Activated B cell treated with CpG ODN at 0.5 μM for 24 hours (primary cell): ENCODE measurements at regions of chr7 and their contacts with region 1.

Region 1: GRCh38 chr7:24572997-24573625 is at the start of gene PALS2:
- DNase-seq: peak; percentile 87
- ATAC-seq: peak; percentile 73
- H3K4me3 Mint-ChIP-seq: peak within 1 kb of the TSS; percentile 91
- H3K27ac Mint-ChIP-seq: peak within 1 kb of the TSS; percentile 89
- H3K4me1 Mint-ChIP-seq: peaks cover 40% of the 10 kb centered on the region
- H3K27me3 Mint-ChIP-seq: no peaks in the 10 kb centered on the region
- CTCF ChIP-seq: no peak
- total RNA-seq, gene PALS2: 29.8 and 34.8 TPM in 2 replicates

Region 2: GRCh38 chr7:23679898-23680413 is 893.2 kb before region 1 on chr7 and contains the start of gene FAM221A:
- CTCF ChIA-PET with region 1: no interaction called
- POLR2A ChIA-PET with region 1: no interaction called
- intact Hi-C with region 1: loop called (anchors 10 kb)
- DNase-seq: peak; percentile 68
- ATAC-seq: peak; percentile 99
- H3K4me3 Mint-ChIP-seq: peak within 1 kb of the TSS; percentile 90
- H3K27ac Mint-ChIP-seq: peak within 1 kb of the TSS; percentile 43
- H3K4me1 Mint-ChIP-seq: peaks cover 20% of the 10 kb centered on the region
- H3K27me3 Mint-ChIP-seq: no peaks in the 10 kb centered on the region
- CTCF ChIP-seq: no peak
- total RNA-seq, gene FAM221A: 6.5 and 8.3 TPM in 2 replicates

Region 3: DNA sequence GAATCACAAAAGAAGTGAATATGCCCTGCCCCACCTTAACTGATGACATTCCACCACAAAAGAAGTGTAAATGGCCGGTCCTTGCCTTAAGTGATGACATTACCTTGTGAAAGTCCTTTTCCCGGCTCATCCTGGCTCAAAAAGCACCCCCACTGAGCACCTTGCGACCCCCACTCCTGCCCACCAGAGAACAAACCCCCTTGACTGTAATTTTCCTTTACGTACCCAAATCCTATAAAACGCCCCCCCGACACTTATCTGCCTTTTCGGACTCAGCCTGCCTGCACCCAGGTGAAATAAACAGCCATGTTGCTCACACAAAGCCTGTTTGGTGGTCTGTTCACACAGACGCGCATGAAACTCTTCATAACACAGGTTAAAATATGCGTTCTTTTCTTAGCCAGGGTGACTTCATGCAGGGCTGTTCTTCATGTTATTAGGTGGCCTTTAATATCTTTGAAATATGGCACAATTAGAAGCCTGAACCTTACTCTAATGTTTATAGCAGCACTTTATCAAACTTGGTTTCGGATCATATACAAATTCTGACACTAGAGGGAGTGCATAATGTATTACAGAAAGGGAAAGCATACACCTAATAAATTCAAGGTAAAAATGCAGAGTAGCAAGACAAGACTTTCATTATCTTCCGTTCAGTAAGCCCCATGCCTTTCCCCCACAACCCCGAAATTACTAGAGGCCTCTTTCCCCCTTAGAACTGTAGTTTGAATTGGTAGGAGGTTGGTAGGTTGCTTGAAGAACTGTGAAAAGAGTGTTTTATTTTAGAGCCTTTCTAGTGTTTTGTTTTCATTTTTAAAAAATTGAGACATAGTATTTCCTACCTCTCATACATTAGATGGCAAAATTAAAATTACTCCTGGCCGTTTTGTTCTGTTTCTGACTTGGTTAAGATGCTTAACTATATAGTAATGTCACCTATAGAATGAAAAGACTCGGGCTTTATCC is 171.2 kb before region 1 on chr7:
- CTCF ChIA-PET with region 1: no interaction called
- POLR2A ChIA-PET with region 1: no interaction called
- intact Hi-C with region 1: loop called (anchors 1 kb)
- DNase-seq: no peak
- ATAC-seq: no peak
- H3K4me3 Mint-ChIP-seq: no peak overlapping the region
- H3K27ac Mint-ChIP-seq: no peak overlapping the region
- H3K4me1 Mint-ChIP-seq: peaks cover 6% of the 10 kb centered on the region
- H3K27me3 Mint-ChIP-seq: peaks cover 6% of the 10 kb centered on the region
- CTCF ChIP-seq: no peak

Region 4: GRCh38 chr7:24665564-24666294 is 92.6 kb after region 1 on chr7:
- CTCF ChIA-PET with region 1: interaction called, 18 read pairs
- POLR2A ChIA-PET with region 1: no interaction called
- intact Hi-C with region 1: loop called (anchors 1 kb)
- DNase-seq: no peak
- ATAC-seq: no peak
- H3K4me3 Mint-ChIP-seq: no peak overlapping the region
- H3K27ac Mint-ChIP-seq: no peak overlapping the region
- H3K4me1 Mint-ChIP-seq: no peaks in the 10 kb centered on the region
- H3K27me3 Mint-ChIP-seq: no peaks in the 10 kb centered on the region
- CTCF ChIP-seq: peak; percentile 89

Region 5: GRCh38 chr7:24732646-24733413 is 159.7 kb after region 1 on chr7:
- CTCF ChIA-PET with region 1: no interaction called
- POLR2A ChIA-PET with region 1: no interaction called
- intact Hi-C with region 1: no loop called
- DNase-seq: no peak
- ATAC-seq: no peak
- H3K4me3 Mint-ChIP-seq: no peak overlapping the region
- H3K27ac Mint-ChIP-seq: no peak overlapping the region
- H3K4me1 Mint-ChIP-seq: peaks cover 6% of the 10 kb centered on the region
- H3K27me3 Mint-ChIP-seq: peaks cover 6% of the 10 kb centered on the region
- CTCF ChIP-seq: no peak

Region 6: DNA sequence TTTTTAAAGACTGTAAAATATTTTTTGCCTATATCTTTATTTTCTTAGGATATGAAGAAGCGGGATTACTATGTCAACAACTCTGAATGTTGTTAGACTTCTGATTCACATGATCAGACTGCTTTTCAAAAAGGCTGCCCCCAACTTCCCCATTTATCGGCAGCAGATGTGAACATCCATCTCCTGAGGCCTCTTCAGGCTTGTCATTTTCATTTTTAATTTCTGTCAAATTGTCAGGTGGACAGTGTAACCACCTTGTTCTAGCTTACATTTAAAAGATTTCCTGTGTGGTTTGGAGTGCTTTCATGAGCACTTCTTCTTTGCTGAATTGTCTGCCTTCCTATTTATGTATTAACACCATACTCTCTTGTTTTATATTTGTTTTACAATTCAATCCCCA is 263.0 kb after region 1 on chr7:
- CTCF ChIA-PET with region 1: no interaction called
- POLR2A ChIA-PET with region 1: no interaction called
- intact Hi-C with region 1: loop called (anchors 10 kb)
- DNase-seq: no peak
- ATAC-seq: peak; percentile 79
- H3K4me3 Mint-ChIP-seq: peak overlapping the region; percentile 39
- H3K27ac Mint-ChIP-seq: peak overlapping the region; percentile 99
- H3K4me1 Mint-ChIP-seq: peaks cover 75% of the 10 kb centered on the region
- H3K27me3 Mint-ChIP-seq: no peaks in the 10 kb centered on the region
- CTCF ChIP-seq: no peak

Region 7: DNA sequence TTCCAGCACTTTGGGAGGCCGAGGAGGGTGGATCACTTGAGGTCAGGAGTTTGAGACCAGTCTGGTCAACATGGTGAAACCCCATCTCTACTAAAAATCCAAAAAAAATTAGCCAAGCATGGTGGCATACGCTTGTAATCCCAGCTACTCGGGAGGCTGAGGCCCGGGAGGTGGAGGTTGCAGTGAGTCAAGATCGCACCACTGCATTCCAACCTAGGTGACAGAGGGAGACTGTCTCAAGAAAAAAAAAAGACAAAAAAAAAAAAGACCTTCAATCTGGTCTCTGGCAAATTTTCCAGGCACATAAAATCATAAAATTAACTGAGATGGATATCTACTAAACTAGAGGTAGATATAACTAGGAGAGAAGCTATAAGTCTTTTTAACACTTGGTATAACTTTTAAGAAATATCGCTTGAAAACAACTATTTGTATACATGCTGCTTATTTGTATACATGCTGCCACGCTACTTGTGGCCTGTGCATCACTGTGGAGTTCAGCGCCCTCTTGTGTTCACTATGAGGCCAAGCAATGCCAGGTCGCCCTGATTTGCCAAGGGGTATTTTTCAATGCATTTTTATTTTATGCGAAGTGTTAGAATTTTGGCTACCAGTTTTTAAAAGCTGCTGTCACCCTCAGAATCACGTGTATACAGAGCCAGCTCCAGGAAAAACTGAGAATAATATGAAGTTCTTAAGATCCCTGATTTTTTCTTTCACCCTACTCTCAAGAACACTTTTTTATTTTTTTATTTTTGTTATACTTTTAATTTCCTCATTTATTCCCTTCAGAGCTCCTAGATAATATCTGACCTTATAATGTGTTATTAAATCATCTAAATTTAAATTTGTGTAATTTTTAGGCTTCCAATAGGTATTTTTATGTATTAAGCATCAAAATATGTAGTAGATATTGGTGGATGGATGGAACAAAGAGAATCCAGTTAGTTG is 525.3 kb after region 1 on chr7:
- CTCF ChIA-PET with region 1: no interaction called
- POLR2A ChIA-PET with region 1: no interaction called
- intact Hi-C with region 1: loop called (anchors 5 kb)
- DNase-seq: no peak
- ATAC-seq: peak; percentile 87
- H3K4me3 Mint-ChIP-seq: no peak overlapping the region
- H3K27ac Mint-ChIP-seq: no peak overlapping the region
- H3K4me1 Mint-ChIP-seq: peaks cover 5% of the 10 kb centered on the region
- H3K27me3 Mint-ChIP-seq: peaks cover 3% of the 10 kb centered on the region
- CTCF ChIP-seq: peak; percentile 31

Region 8: DNA sequence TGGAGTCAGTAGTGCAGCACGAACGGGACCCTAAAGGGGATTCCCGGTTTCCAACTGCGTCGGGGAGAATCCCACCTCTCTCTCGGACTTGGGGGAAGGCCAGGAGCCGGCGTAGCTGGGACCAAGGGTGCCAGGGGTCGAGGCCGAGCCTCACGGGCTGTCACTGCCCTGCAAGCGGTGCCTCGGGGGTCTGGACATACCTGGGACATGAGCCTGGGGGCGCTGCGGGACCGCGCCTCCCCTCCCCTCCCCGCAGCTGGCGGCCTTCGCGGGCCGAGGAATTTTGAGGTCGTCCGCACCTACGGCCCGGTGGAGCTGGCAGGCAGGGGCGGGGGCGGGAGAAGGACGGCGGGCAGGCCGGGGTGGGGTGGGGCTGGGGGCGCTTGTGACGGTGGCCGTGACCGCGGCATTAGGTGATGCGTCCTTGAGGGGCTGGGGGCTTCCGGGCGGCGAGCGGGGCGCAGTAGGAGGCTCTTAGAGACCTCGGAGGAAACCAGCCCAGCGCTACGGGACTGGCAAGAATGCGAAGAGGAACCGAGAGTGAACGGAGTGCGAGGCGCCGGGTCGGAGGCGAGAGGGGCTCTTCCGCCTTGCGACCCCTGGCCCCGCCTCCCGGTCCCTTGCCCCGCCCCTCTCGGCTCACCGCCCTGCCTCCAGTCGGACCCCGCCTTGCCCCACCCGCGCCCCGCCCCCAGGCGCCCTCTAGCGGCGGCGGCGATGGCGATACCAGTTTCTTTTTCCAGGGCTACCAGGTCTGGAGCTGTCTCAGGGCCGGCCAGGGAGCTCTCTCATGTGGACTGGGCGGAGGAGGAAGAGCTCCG is 606.9 kb after region 1 on chr7:
- CTCF ChIA-PET with region 1: no interaction called
- POLR2A ChIA-PET with region 1: no interaction called
- intact Hi-C with region 1: loop called (anchors 2 kb)
- DNase-seq: peak; percentile 100
- ATAC-seq: peak; percentile 97
- H3K4me3 Mint-ChIP-seq: peak overlapping the region; percentile 87
- H3K27ac Mint-ChIP-seq: peak overlapping the region; percentile 95
- H3K4me1 Mint-ChIP-seq: peaks cover 15% of the 10 kb centered on the region
- H3K27me3 Mint-ChIP-seq: no peaks in the 10 kb centered on the region
- CTCF ChIP-seq: peak; percentile 46